H1 (cell line): ENCODE measurements at regions of chr13 and their contacts with region 1.

Region 1: GRCh38 chr13:44050450-44051063 is 170.9 kb downstream of the LACC1 start:
- DNase-seq: no peak
- H3K4me3 ChIP-seq: no peak overlapping the region
- H3K27ac ChIP-seq: no peak overlapping the region
- H3K4me1 ChIP-seq: peaks cover 0 to 14% (median 6%) of the 10 kb centered on the region in 4 experiments; a peak in 6 of 7 replicates
- H3K27me3 ChIP-seq: no peaks in the 10 kb centered on the region
- CTCF ChIP-seq: peak in 2 of 3 experiments; percentile 38 to 44; a peak in 2 of 4 replicates
- EP300 ChIP-seq: no peak
- POLR2A ChIP-seq: no peak
- RAD21 ChIP-seq: peak; percentile 64 to 65

Region 2: GRCh38 chr13:44063876-44064275 is 13.3 kb after region 1 on chr13:
- CTCF ChIA-PET with region 1: interaction called, 16 read pairs
- POLR2A ChIA-PET with region 1: no interaction called
- DNase-seq: no peak
- H3K4me3 ChIP-seq: no peak overlapping the region
- H3K27ac ChIP-seq: no peak overlapping the region
- H3K4me1 ChIP-seq: peaks cover 0 to 7% (median 0%) of the 10 kb centered on the region in 4 experiments; a peak in 1 of 7 replicates
- H3K27me3 ChIP-seq: no peaks in the 10 kb centered on the region; a peak in 1 of 7 replicates
- CTCF ChIP-seq: no peak
- EP300 ChIP-seq: no peak
- POLR2A ChIP-seq: no peak
- RAD21 ChIP-seq: no peak

Region 3: GRCh38 chr13:44165221-44165907 is 114.8 kb after region 1 on chr13:
- CTCF ChIA-PET with region 1: interaction called, 12 read pairs
- POLR2A ChIA-PET with region 1: no interaction called
- DNase-seq: no peak
- H3K4me3 ChIP-seq: no peak overlapping the region
- H3K27ac ChIP-seq: no peak overlapping the region
- H3K4me1 ChIP-seq: no peaks in the 10 kb centered on the region
- H3K27me3 ChIP-seq: no peaks in the 10 kb centered on the region
- CTCF ChIP-seq: no peak
- EP300 ChIP-seq: no peak
- POLR2A ChIP-seq: no peak
- RAD21 ChIP-seq: no peak